Activated B cell treated with CpG ODN at 0.5 μM for 24 hours (primary cell): ENCODE measurements at regions of chr7 and their contacts with region 1.

Region 1: GRCh38 chr7:66748822-66749221 is 8.3 kb downstream of the RABGEF1 start:
- DNase-seq: no peak
- ATAC-seq: peak; percentile 51
- H3K4me3 Mint-ChIP-seq: no peak overlapping the region
- H3K27ac Mint-ChIP-seq: peak overlapping the region; percentile 16
- H3K4me1 Mint-ChIP-seq: peaks cover 86% of the 10 kb centered on the region
- H3K27me3 Mint-ChIP-seq: no peaks in the 10 kb centered on the region
- CTCF ChIP-seq: no peak

Region 2: DNA sequence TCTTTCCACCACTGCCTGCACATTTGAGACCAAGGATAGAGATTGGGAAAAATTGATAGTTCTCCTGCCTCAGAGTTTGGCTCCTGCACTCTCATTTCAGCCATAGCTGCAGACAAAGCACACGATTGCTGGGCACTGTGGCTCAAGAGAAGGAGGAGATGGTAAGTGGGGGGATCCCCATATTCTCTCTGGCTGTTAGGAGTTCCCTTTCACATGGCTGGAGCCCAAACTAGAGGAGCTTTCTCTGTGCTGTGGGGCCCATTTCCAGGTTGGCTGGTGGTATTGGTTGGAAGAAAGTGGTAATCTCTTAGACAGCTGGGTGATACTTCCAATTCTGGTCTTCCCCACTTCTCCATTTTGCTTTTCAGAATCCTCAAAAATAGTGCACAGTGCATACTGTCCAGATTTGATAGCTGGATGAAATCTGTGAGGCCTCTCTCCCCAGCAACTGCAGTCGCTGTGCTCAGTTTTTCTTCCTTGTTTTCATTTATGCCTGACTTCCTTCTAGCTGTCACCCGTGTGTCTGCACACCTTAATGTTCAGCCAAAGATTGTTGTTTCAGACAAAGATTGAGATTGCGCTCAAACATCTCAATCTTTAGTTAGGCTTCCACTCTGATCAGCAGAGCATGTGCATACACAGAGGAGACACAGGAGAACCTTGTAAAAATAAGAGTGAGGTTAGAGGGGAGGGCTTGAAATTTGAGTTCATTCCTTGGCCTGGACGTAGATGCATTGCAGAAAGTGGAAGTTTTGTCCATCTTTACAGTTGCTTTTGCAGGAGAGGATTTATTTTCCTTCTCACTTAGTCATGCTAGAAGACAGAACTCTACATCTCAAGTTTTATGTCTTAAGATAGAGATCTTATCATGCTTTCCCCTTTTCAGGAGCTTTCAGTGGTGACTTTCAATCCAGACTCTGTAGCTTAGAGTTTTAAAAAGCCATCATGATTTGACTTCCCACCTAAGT is 20.3 kb after region 1 on chr7:
- CTCF ChIA-PET with region 1: no interaction called
- POLR2A ChIA-PET with region 1: interaction called, 3 read pairs
- intact Hi-C with region 1: loop called (anchors 2 kb)
- DNase-seq: no peak
- ATAC-seq: peak; percentile 31
- H3K4me3 Mint-ChIP-seq: peak overlapping the region; percentile 0
- H3K27ac Mint-ChIP-seq: peak overlapping the region; percentile 76
- H3K4me1 Mint-ChIP-seq: peaks cover 62% of the 10 kb centered on the region
- H3K27me3 Mint-ChIP-seq: no peaks in the 10 kb centered on the region
- CTCF ChIP-seq: no peak